ENCODE measurements at regions of chr6 and their contacts with region 1.

Region 1: GRCh38 chr6:35128496-35128895 is 12.6 kb downstream of the TCP11 start:
- DNase-seq: no peak
- H3K4me3 ChIP-seq: no peak overlapping the region
- H3K27ac ChIP-seq: no peak overlapping the region
- H3K4me1 ChIP-seq: no peaks in the 10 kb centered on the region
- H3K27me3 ChIP-seq: no peaks in the 10 kb centered on the region
- CTCF ChIP-seq: no peak

Region 2: GRCh38 chr6:34602318-34603111 is 526.0 kb before region 1 on chr6:
- CTCF ChIA-PET with region 1: no interaction called
- dilution Hi-C with region 1: loop called (anchors 5 kb)
- in situ Hi-C with region 1: no loop called
- intact Hi-C with region 1: no loop called
- DNase-seq: no peak
- H3K4me3 ChIP-seq: no peak overlapping the region
- H3K27ac ChIP-seq: no peak overlapping the region
- H3K4me1 ChIP-seq: peaks cover 6% of the 10 kb centered on the region
- H3K27me3 ChIP-seq: no peaks in the 10 kb centered on the region
- CTCF ChIP-seq: no peak

Measured in mammary epithelial cell (primary cell).